Spleen (tissue), 13 donors: ENCODE measurements at regions of chr18 and their contacts with region 1.

Region 1: DNA sequence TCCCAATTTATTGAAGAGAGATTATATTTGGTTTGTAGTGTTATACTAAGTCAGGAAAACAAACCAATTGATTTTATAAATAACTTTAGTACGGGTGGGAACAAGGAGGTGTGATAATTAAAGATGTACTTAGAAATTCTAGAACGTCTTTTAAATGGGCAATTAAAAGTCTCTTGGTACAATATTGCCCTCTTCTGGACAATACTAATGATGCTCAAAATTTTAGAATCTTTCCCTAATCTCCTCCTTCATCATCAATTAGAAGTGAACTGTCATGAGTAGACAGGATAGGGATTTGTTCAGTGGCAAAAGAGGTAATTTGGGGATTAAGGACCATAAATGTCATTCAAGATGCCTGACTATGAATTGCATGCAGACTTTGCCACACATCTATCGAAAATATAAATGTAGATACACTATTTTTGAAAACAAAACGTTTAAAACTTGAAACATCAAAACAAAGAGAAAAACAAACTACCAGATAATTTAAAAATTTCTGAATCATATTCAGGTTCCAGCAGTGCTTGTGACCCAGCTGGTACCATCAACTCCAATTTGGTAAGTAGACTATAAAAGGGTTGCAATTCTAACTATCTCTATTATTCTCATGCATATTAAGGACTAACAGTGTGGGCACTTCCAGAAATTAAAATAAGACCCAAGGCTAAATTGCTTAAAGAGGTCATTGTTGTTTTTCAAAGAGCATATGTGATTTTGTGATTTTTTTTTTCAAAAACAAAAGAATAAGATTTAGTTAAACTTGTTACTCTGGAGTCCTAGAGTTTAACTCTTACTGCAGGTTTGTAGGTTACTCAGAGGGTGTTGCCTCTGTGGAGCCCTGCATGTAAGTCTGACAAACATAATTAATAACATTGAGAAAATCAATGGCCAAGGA is 123.5 kb downstream of the LAMA3 start:
- DNase-seq: no peak
- H3K4me3 ChIP-seq: no peak overlapping the region
- H3K27ac ChIP-seq: no peak overlapping the region
- H3K4me1 ChIP-seq: peaks cover 0 to 15% (median 0%) of the 10 kb centered on the region in 6 donors
- H3K27me3 ChIP-seq: no peaks in the 10 kb centered on the region
- CTCF ChIP-seq: peak in 9 of 11 experiments; percentile 19 to 57 (median 48)
- POLR2A ChIP-seq: no peak

Region 2: GRCh38 chr18:23515911-23516546 is 296.8 kb before region 1 on chr18:
- intact Hi-C with region 1: loop called (anchors 10 kb)
- DNase-seq: peak; percentile 88
- H3K4me3 ChIP-seq: no peak overlapping the region
- H3K27ac ChIP-seq: peak overlapping the region in 2 of 8 donors; percentile 1 to 21
- H3K4me1 ChIP-seq: peaks cover 0 to 46% (median 21%) of the 10 kb centered on the region in 6 donors
- H3K27me3 ChIP-seq: no peaks in the 10 kb centered on the region
- CTCF ChIP-seq: peak; percentile 65 to 92 (median 84)
- POLR2A ChIP-seq: no peak

Region 3: DNA sequence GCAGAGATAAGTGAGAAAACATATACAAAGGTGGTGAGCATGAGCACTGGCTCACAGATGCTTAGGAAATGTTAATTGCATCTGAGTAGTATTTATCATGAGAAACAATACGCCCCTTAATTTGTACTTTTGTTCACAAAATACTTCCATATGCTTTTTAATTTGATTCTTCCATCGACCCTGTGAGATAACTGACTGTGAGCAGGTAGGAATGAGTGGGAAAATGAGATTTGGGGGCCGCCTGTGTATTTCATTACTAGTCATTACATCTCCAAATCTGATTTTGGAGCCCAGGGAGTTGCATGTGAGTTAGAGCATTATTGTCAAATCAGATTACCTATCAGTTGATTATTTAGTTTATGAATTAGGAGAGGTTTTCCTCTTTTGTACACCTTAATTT is 189.8 kb before region 1 on chr18:
- intact Hi-C with region 1: loop called (anchors 5 kb)
- DNase-seq: no peak
- H3K4me3 ChIP-seq: no peak overlapping the region
- H3K27ac ChIP-seq: no peak overlapping the region
- H3K4me1 ChIP-seq: peaks cover 0 to 25% (median 16%) of the 10 kb centered on the region in 6 donors
- H3K27me3 ChIP-seq: peaks cover 0 to 40% (median 14%) of the 10 kb centered on the region in 7 donors
- CTCF ChIP-seq: no peak
- POLR2A ChIP-seq: no peak

Region 4: GRCh38 chr18:23900994-23901393 is 88.2 kb after region 1 on chr18:
- intact Hi-C with region 1: no loop called
- DNase-seq: no peak
- H3K4me3 ChIP-seq: no peak overlapping the region
- H3K27ac ChIP-seq: no peak overlapping the region
- H3K4me1 ChIP-seq: peaks cover 0 to 11% (median 6%) of the 10 kb centered on the region in 6 donors
- H3K27me3 ChIP-seq: no peaks in the 10 kb centered on the region
- CTCF ChIP-seq: no peak
- POLR2A ChIP-seq: no peak

Region 5: DNA sequence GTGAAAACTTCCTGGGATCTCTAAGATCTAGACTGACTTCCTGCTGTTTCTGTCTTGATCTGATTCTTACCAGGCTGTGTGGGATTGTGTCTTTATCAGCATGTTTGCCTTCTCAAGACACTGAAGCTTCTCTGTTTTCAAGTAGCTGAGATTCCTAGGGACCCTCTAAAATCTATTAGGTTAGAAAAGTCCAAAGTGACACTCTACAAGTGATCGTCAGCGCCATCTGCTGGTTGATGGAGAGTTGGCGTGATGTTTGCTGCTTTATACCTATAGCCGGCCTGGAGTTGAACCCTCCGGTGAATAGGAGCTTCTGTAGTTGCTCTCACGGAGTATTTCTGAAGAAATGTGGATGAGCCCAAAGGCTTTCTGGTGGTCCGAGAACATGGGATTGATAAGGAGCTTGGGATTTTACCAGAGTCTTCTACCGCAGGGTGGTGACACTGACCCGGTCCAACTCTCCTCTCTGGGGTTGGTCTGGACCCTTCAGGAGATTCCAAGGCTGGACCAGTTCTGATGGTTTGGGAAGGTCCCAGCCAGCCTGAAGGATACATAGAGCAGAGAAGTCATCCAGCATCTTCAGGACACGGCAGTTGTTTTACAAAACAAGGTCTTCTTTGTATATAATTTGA is 105.7 kb after region 1 on chr18:
- intact Hi-C with region 1: loop called (anchors 10 kb)
- DNase-seq: peak; percentile 86
- H3K4me3 ChIP-seq: no peak overlapping the region
- H3K27ac ChIP-seq: no peak overlapping the region
- H3K4me1 ChIP-seq: peaks cover 0 to 7% (median 6%) of the 10 kb centered on the region in 6 donors
- H3K27me3 ChIP-seq: no peaks in the 10 kb centered on the region
- CTCF ChIP-seq: peak; percentile 25 to 88 (median 79)
- POLR2A ChIP-seq: no peak

Region 6: GRCh38 chr18:24103320-24104021 is 290.7 kb after region 1 on chr18:
- intact Hi-C with region 1: no loop called
- DNase-seq: no peak
- H3K4me3 ChIP-seq: no peak overlapping the region
- H3K27ac ChIP-seq: no peak overlapping the region
- H3K4me1 ChIP-seq: no peaks in the 10 kb centered on the region
- H3K27me3 ChIP-seq: no peaks in the 10 kb centered on the region
- CTCF ChIP-seq: no peak
- POLR2A ChIP-seq: no peak